HepG2 (cell line): ENCODE measurements at regions of chr5 and their contacts with region 1.

Region 1: DNA sequence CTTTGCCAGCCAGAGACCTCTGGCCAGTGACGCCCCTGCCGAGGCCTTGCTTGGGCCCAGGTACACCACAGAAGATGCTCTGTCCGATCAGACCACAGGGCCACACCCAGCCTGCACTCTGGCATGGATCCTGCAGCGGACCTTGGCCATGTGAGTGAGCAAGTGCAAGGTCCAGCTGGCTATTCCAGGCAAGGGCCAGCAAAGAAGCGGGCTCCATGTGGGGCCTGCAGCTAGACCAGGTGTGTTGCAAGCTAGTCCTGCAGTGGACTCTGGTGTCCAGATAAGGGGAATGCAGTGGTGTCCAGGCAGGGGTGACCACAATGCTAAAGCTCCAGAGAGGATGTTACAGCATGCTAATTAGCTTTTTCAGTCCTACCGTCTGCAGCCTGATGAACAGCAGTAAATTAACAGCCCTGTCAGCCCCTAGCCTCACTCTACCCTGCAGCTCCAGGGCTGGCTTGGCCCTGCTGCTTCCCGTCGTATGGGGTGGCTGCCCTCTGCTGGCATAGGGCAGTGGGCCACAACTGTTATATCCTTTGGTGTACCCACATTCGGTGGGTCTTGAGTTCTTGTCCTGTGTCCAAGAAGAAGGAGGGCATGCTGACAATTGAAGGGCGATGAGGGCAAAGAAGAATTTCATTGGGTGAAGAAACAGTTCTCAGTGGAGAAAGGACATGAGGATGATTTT is 284.5 kb upstream of the POU5F2 start:
- DNase-seq: peak; percentile 62
- ATAC-seq: peak; percentile 99
- H3K4me3 ChIP-seq: no peak overlapping the region
- H3K27ac ChIP-seq: no peak overlapping the region
- H3K4me1 ChIP-seq: peaks cover 20% of the 10 kb centered on the region
- H3K27me3 ChIP-seq: no peaks in the 10 kb centered on the region
- CTCF ChIP-seq: peak; percentile 75
- EP300 ChIP-seq: no peak
- POLR2A ChIP-seq: no peak
- RAD21 ChIP-seq: peak; percentile 68; the same call in 1 of the 2 replicates

Region 2: GRCh38 chr5:94111209-94112004 is 85.5 kb after region 1 on chr5:
- CTCF ChIA-PET with region 1: no interaction called
- POLR2A ChIA-PET with region 1: no interaction called
- in situ Hi-C with region 1: no loop called
- intact Hi-C with region 1: loop called (anchors 5 kb)
- DNase-seq: peak; percentile 96
- ATAC-seq: peak; percentile 96
- H3K4me3 ChIP-seq: peak overlapping the region; percentile 74 to 94 (median 83)
- H3K27ac ChIP-seq: peak overlapping the region; percentile 85
- H3K4me1 ChIP-seq: peaks cover 30% of the 10 kb centered on the region
- H3K27me3 ChIP-seq: no peaks in the 10 kb centered on the region
- CTCF ChIP-seq: peak; percentile 68
- EP300 ChIP-seq: 0 out of 4 replicates have a peak, but pooled peaks of 1 of the 2 experiments have one; percentile 5
- POLR2A ChIP-seq: peak; percentile 72 to 83
- RAD21 ChIP-seq: no peak